Ascending aorta (tissue), 2 donors: ENCODE measurements at regions of chr3 and their contacts with region 1.

Region 1: DNA sequence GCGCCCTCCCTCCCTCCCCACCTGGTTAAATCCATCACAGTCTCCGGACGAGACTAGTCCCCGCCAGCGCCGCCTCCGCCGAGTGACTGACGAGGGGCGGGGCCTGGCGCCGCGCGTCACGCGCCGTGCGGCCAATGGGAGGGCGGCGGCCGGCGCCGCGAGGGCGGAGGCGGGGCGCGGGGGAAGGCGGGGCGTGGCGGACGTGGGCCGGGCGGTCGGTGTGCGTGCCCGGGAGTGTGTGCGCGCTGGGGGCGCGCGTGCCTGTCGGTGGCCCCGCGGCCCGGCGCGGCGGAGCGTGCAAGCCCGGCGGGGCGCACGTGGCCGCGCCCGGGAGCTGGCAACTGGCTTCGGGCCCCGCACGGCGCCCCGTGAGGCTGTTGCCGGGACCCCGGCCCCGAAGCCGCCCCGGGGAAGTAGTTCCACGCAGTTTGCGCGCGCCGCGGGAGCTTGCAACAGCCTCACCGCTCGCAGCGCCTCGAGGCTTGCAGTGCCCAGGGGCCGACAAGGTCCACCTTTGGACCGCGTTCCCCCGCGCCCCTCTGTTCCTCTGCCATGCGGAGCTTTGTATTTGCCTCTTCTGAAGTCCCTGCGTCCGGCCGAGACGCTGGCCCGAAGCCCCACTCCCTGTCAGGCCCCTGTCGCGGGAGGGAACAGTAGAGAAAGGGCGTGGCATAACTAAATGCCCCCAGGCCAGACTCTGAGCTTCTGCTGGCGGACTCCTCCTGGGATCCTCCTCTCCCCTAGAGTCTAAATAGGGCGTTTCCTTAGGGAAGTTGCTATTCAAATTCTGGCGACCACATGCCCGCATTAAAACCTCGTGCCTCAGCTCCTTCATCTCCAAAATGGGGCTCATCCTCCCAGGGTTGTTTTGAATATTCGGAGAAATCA is 400.9 kb downstream of the SHQ1 start:
- DNase-seq: peak; percentile 39 to 94
- H3K4me3 ChIP-seq: peak overlapping the region; percentile 67 to 91
- H3K27ac ChIP-seq: peak overlapping the region; percentile 68 to 88
- H3K4me1 ChIP-seq: peaks cover 0 to 13% of the 10 kb centered on the region in 2 donors
- H3K27me3 ChIP-seq: no peaks in the 10 kb centered on the region
- CTCF ChIP-seq: no peak

Region 2: DNA sequence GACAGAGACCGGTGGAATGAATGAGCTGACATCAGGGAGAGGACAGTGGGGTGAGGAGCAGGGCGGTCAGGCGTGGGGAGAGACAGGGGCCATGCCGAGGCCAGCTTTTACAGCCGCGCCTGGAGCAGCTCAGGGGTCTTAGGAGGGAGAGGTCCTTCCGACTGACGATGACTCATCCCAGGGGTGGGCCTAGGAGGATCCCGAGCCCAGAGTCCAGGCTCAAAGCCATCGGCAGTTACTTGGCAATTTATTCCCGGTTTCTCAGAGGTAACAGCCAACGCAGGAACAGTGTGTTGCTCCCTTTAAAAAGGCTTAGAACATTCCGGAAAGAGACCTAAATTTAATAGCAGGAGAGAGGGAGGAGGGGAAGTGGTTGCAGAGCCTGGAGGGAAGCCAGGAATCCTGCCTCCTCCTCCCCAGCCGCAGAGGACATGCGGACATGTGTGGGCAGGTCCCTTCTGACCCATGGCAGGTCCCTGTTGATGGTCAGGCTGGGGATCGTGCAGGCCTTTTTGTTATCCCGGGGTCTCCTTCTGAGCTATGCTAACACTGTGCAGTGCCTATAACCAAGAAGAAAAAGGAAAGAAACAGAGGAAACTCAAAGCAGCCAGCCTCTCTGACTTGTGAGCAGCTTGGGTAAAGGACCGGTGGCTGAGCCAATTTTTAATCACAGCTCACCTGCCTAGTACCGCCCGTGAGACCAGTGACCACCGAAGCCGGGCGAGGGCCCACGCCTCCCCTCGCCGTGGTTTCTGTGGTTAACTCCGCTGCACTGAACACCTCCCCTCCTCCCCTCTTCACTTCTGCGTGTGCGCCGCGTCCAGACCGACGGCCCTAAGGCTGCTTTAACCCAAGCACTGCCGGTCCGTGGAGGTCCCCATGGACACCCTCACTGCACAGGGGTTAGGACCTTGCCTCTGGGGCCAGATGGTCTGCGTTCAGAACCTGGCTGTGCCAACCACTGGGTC is 269.9 kb before region 1 on chr3:
- intact Hi-C with region 1: loop called (anchors 10 kb)
- DNase-seq: peak in 1 of 2 donors; percentile 75
- H3K4me3 ChIP-seq: peak overlapping the region; percentile 18 to 51
- H3K27ac ChIP-seq: peak overlapping the region; percentile 25 to 41
- H3K4me1 ChIP-seq: peaks cover 18 to 43% of the 10 kb centered on the region in 2 donors
- H3K27me3 ChIP-seq: no peaks in the 10 kb centered on the region
- CTCF ChIP-seq: no peak

Region 3: DNA sequence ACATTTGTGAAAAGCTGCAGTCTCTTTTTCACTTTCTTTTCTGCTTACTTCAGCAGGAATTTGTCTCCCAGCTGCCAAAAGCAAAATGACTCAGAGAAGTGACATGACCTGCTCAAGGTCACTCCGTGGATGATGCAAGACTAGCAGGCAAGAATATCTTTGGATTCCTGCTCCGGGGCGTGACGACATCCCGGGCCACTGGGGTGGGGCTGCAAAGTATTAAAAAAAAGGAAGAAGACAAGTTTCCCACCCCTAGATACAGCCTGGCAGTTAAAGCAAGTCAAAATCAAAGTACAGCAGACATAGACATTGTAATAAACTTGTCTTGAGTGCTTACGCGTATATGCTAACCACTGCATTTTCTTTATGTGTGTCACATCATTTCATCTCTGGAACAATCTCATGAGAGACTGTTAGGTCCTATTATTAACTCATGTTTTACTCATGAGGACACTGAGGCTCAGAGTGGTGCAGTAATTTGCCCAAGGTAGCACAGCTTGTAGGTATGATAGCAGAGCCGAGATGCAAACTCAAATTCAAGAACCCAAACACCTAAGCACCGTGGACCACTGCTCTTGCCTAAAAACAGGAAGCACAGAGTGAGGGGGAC is 177.1 kb before region 1 on chr3:
- intact Hi-C with region 1: loop called (anchors 2 kb)
- DNase-seq: peak; percentile 78 to 95
- H3K4me3 ChIP-seq: no peak overlapping the region
- H3K27ac ChIP-seq: peak overlapping the region in 1 of 2 donors; percentile 10
- H3K4me1 ChIP-seq: peaks cover 0 to 24% of the 10 kb centered on the region in 2 donors
- H3K27me3 ChIP-seq: no peaks in the 10 kb centered on the region
- CTCF ChIP-seq: no peak

Region 4: DNA sequence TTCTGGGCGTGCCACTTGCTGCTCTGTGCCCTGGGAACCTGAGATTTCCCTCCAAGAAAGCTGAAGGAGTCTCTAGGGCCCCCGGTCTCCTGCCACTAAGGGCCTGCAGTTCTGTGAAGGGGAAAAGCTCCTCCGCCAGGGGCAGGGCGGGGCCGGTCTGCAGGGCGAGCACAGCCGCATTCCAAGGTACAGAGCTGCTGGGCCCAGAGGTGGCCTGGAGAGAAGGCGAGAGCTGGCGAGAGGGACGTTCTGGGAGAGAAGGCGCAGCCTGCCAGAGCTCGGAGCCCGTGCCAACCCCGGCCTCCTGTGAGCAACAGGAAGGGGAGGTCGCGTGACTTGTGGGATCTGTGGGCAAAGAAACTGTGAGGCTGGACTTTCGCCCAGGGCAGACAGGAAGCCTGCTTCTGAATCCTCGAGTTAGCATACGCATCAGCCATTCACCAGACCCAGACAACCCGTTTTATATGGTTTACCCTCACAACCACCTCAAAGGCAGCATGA is 99.4 kb before region 1 on chr3:
- intact Hi-C with region 1: loop called (anchors 2 kb)
- DNase-seq: peak; percentile 76 to 95
- H3K4me3 ChIP-seq: peak overlapping the region in 1 of 2 donors; percentile 1
- H3K27ac ChIP-seq: peak overlapping the region; percentile 59 to 76
- H3K4me1 ChIP-seq: peaks cover 11 to 17% of the 10 kb centered on the region in 2 donors
- H3K27me3 ChIP-seq: no peaks in the 10 kb centered on the region
- CTCF ChIP-seq: peak in 2 of 3 experiments; percentile 17 to 29

Region 5: DNA sequence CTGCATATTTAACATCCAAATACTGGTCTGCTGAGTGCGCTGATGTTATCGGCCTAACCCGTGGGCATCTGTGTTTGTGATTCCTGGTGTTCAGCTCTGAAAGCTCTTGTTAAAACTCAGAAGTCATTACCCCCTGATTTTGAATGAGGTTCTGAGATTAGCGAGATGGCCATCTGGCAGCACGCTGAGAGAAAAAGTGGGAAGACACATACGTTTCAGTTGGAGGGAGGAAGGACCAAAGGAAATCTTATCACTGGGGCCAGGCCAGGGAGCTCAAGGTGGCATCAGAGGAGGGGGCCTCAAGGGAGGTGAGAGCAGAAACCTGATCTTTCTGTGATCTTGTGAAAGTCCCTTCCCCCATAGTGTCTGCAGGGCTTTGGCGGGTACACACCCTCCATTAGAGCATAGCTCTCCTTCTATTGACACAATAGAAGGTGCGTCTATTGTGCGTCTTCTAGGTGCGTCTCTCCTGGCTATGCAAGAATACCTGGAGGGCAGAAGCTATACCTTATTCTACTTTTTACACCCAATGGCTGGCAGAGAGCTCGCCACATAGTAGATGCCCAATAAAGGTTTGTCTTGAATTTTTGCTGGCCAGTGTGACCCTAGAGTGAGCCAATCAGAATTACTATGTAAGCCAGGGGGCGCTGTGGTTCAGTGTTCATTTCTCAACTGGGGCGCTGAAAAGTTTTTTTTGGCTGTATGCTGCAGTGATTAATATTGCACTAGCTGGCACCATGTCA is 218.6 kb after region 1 on chr3:
- intact Hi-C with region 1: loop called (anchors 5 kb)
- DNase-seq: no peak
- H3K4me3 ChIP-seq: no peak overlapping the region
- H3K27ac ChIP-seq: no peak overlapping the region
- H3K4me1 ChIP-seq: peaks cover 0 to 8% of the 10 kb centered on the region in 2 donors
- H3K27me3 ChIP-seq: no peaks in the 10 kb centered on the region
- CTCF ChIP-seq: peak; percentile 24 to 48 (median 36)

Region 6: GRCh38 chr3:72996473-72997333 is 549.4 kb after region 1 on chr3 and contains the start of gene PPP4R2:
- intact Hi-C with region 1: loop called (anchors 1 kb)
- DNase-seq: peak; percentile 44 to 91
- H3K4me3 ChIP-seq: peak within 1 kb of the TSS; percentile 77 to 96
- H3K27ac ChIP-seq: peak within 1 kb of the TSS; percentile 93 to 99
- H3K4me1 ChIP-seq: peaks cover 7 to 28% of the 10 kb centered on the region in 2 donors
- H3K27me3 ChIP-seq: no peaks in the 10 kb centered on the region
- CTCF ChIP-seq: peak in 1 of 3 experiments; percentile 5
- total RNA-seq, gene PPP4R2: 8.2 TPM